Endothelial cell of umbilical vein (primary cell): ENCODE measurements at regions of chr20 and their contacts with region 1.

Region 1: GRCh38 chr20:23061734-23062561 is 12.5 kb upstream of the THBD start:
- DNase-seq: peak; percentile 92
- H3K4me3 ChIP-seq: no peak overlapping the region
- H3K27ac ChIP-seq: peak overlapping the region; percentile 74
- H3K4me1 ChIP-seq: peaks cover 29% of the 10 kb centered on the region
- H3K27me3 ChIP-seq: no peaks in the 10 kb centered on the region
- CTCF ChIP-seq: peak; percentile 57 to 69
- POLR2A ChIP-seq: no peak

Region 2: DNA sequence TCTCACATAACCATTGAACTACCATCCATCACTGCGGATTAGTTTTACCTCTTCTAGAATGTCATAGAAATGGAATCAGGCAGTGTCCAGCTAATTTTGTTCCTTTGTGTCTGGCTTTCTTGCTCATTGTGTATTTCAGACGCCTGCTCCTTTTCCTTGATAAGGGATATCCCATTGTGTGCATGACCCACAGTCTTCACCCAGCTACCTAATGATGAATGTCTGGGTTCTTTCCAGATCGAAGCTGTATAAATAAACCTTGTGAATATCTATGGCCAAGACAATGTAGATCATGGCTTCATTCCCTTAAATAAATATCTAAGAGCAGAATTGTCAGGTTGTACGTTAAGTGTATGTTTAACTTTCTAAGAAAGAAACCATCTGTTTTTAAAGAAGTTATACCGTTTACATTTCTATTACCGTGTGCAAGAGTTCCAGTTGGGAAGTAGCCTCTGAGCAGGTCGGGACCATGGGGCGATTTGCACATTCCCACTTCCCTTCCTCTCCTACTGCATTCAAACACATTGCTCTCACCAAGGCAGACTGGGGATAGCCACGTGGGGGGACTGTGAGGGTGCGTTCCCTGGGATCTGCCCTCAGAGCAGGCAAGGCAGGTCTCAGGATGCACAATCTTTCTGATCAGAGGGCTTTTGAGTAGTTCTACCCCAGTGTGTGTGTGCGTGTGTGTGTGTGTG is 11.1 kb after region 1 on chr20:
- CTCF ChIA-PET with region 1: interaction called, 9 read pairs
- POLR2A ChIA-PET with region 1: no interaction called
- dilution Hi-C with region 1: no loop called
- intact Hi-C with region 1: loop called (anchors 1 kb)
- DNase-seq: peak; percentile 97
- H3K4me3 ChIP-seq: no peak overlapping the region
- H3K27ac ChIP-seq: peak overlapping the region; percentile 76
- H3K4me1 ChIP-seq: peaks cover 20% of the 10 kb centered on the region
- H3K27me3 ChIP-seq: no peaks in the 10 kb centered on the region
- CTCF ChIP-seq: no peak
- POLR2A ChIP-seq: no peak

Region 3: DNA sequence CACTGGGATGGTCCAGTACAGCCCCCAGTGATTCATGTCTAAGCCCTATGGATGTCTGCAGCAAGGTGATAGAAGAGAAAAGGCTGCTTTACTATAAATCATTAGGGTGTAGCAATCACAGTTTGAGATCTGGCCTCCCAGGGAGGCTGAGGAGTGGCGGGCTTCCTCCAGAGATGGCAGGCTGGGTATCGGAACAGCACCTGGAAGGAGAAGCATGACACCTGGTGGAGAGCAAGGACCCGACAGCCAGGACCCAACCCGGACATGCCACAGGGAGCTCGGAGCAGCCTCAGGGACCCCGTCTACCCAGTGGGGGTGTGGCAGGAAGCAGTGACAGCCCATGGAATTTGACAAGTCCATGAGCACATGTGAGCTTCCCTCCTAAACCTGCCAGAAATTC is 139.0 kb after region 1 on chr20:
- CTCF ChIA-PET with region 1: interaction called, 18 read pairs
- POLR2A ChIA-PET with region 1: no interaction called
- dilution Hi-C with region 1: no loop called
- intact Hi-C with region 1: no loop called
- DNase-seq: no peak
- H3K4me3 ChIP-seq: no peak overlapping the region
- H3K27ac ChIP-seq: no peak overlapping the region
- H3K4me1 ChIP-seq: no peaks in the 10 kb centered on the region
- H3K27me3 ChIP-seq: no peaks in the 10 kb centered on the region
- CTCF ChIP-seq: peak; percentile 42 to 54
- POLR2A ChIP-seq: no peak